ENCODE measurements at regions of chr4 and their contacts with region 1.

Region 1: DNA sequence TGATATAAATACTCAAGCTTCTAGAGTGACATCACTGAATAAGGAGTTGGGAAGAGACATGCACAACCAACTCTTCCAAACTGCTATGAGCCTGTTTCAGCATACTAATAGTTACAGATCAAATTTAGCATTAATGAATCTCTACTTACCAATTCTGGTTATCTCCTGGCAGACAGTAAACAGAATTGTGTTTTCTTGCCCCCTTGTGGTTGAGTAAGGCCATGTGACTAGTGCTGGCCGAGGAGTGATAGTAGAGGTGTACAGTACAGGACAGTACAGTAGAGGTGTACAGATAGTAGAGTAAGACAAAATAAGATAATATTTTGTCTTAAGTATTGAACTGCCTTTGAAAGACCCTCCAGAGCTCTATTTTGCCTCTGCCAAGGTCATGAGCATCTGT is 681.4 kb downstream of the GABRG1 start:
- DNase-seq: no peak
- ATAC-seq: no peak
- H3K4me3 ChIP-seq: no peak overlapping the region
- H3K27ac ChIP-seq: no peak overlapping the region
- H3K4me1 ChIP-seq: no peaks in the 10 kb centered on the region
- H3K27me3 ChIP-seq: no peaks in the 10 kb centered on the region
- CTCF ChIP-seq: no peak
- POLR2A ChIP-seq: no peak

Region 2: GRCh38 chr4:45530498-45530897 is 88.0 kb after region 1 on chr4:
- in situ Hi-C with region 1: loop called in 1 of 4 experiments (anchors 25 kb)
- intact Hi-C with region 1: no loop called
- DNase-seq: no peak
- ATAC-seq: no peak
- H3K4me3 ChIP-seq: no peak overlapping the region
- H3K27ac ChIP-seq: no peak overlapping the region
- H3K4me1 ChIP-seq: no peaks in the 10 kb centered on the region
- H3K27me3 ChIP-seq: no peaks in the 10 kb centered on the region
- CTCF ChIP-seq: no peak
- POLR2A ChIP-seq: no peak

Region 3: GRCh38 chr4:45865781-45866180 is 423.3 kb after region 1 on chr4:
- in situ Hi-C with region 1: no loop called
- intact Hi-C with region 1: no loop called
- DNase-seq: no peak
- ATAC-seq: no peak
- H3K4me3 ChIP-seq: no peak overlapping the region
- H3K27ac ChIP-seq: no peak overlapping the region
- H3K4me1 ChIP-seq: no peaks in the 10 kb centered on the region
- H3K27me3 ChIP-seq: no peaks in the 10 kb centered on the region
- CTCF ChIP-seq: no peak
- POLR2A ChIP-seq: no peak

Measured in gastrocnemius medialis (tissue), 4 donors.